ENCODE measurements at regions of chr15 and their contacts with region 1.

Region 1: DNA sequence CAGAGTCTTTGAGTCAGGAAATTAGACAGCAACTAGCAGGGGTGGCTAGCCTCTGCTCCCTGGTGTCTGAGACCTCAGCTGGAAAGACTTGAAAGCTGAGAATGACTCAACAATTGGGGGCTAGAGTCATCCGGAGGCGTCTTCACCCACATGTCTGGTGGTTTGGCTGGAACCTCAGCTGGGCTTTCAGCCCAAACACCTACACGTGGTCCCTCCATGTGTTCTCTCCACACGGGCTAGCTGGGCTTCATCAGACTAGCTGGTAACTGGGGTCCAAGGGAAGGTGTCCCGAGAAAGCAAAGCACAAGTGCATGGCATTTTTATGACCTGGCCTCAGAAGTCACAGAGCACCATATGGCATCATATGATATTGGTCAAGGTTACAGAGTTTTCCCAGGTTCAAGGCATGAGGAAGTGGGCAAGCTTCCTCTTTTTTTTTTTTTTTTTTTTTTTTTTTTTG is 19.9 kb upstream of the ABHD2 start:
- DNase-seq: peak; percentile 53
- CTCF ChIP-seq: no peak

Region 2: DNA sequence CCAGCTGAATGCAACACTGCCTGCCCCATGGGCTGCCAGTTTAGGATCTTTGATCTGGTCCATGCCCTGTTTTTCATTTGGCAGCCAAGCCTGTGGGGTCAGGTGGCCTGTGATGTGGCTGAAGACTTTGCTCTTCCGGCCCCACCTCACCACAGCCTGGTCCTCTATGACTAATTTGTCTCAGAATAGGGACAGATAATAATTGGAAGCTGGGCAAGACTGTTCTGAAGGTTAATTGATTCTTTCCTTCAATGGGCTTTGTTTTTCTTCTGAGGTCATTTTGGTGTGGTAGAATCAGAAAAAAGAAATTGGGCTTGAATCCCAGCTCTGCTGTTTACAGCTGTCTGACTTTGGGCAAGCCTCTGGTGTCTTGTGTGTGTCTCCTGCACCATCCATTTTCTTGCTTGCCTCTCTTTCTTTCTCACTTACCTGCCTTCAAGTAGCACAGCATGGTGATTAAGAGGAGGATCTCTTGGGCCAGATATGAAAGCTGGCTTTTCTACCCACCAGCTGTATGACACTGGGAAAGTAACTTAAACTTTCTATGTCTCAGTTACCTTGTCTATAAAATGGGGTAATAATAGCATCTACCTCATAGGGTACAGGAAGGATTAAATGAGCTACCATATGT is 44.1 kb after region 1 on chr15:
- in situ Hi-C with region 1: loop called (anchors 10 kb)
- DNase-seq: peak; percentile 40
- CTCF ChIP-seq: no peak

Region 3: GRCh38 chr15:89278307-89278706 is 210.0 kb after region 1 on chr15:
- in situ Hi-C with region 1: no loop called
- DNase-seq: no peak
- CTCF ChIP-seq: no peak